ENCODE measurements at regions of chr1 and their contacts with region 1.

Region 1: DNA sequence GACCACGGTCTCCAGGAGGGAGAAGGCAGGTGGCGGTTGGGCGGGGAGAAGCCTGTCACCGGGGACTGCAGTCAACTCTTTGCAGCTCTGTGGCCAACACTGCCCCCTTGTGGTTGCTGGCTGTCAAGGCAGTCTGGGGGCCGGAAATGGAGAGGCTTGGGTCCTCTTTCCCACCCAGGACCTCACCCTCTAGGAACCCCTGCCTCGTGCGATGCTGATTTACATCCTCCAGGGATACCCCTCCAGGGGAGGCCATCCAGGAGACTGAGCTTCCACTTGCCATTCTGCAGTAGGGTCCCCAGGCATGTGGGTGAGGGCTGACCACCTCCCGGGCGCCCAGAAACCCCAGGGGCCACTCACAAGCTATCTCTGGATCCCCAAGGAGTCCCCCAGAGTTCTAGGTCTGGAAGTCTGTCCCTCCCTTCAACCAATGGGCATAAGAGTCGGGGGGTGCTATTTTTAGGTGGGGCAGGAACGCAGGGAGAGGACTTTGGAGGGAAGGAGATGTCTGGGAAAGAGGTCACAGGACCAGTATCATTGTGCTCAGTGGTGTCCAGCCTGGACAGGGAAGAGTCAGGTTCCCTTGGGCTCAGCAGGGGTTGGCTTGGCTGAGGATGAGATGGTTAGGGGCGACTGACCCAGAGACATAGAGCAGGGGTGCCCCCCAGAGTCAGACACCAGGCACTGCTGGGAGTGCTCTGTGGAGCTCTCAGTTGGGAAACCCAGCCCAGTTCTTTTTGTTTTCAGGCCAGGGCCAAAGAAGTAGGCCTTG is 7.1 kb upstream of the GPR61 start:
- DNase-seq: peak; percentile 85 to 92
- ATAC-seq: peak; percentile 74 to 77 (median 76)
- H3K4me3 ChIP-seq: peak overlapping the region; percentile 33
- H3K27ac ChIP-seq: peak overlapping the region; percentile 83
- H3K4me1 ChIP-seq: peaks cover 63% of the 10 kb centered on the region
- H3K27me3 ChIP-seq: no peaks in the 10 kb centered on the region
- CTCF ChIP-seq: peak; percentile 98

Region 2: DNA sequence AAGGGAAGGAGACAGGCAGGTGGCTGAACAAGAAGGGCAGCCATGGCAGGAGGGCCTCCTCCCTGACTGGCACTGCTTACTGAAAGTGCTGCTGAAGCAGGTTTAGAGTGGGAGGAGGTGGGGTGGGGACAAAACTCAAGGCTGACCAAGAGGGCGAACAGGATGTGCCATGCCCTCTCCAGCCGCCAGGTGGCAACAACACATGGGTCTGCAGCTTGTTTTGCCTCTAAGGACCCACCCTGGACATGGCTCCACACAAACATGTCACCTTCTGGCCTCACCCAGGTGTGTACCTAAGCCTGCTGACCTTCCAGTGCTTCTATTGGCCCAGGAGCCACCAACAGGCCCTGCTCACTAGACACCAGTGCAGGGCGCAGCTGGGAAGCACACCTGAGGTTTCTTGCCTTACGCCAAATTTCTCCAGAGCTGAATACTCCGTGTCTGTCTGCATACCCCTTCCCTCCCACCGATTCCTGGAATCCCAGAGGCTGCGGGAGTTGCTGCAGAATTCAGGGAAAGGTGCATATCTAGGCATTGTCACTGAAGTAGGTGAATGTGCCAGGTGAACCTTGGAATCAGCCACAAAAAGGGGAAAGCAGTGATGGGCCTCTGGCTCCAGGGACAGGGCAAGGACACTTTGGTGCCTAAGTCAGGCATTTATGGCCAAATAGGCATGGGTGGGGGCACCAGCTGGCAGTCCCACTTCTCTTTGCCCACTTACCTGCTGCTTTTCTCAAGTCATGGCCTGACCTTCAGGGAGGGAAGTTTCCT is 254.9 kb before region 1 on chr1:
- intact Hi-C with region 1: loop called in 1 of 2 experiments (anchors 2 kb)
- DNase-seq: peak; percentile 77 to 85
- ATAC-seq: peak; percentile 65 to 85 (median 78)
- H3K4me3 ChIP-seq: no peak overlapping the region
- H3K27ac ChIP-seq: no peak overlapping the region
- H3K4me1 ChIP-seq: no peaks in the 10 kb centered on the region
- H3K27me3 ChIP-seq: no peaks in the 10 kb centered on the region
- CTCF ChIP-seq: peak; percentile 87

Region 3: GRCh38 chr1:109412551-109412950 is 120.0 kb before region 1 on chr1:
- intact Hi-C with region 1: loop called in 1 of 2 experiments (anchors 5 kb)
- DNase-seq: no peak
- ATAC-seq: no peak
- H3K4me3 ChIP-seq: no peak overlapping the region
- H3K27ac ChIP-seq: no peak overlapping the region
- H3K4me1 ChIP-seq: peaks cover 30% of the 10 kb centered on the region
- H3K27me3 ChIP-seq: no peaks in the 10 kb centered on the region
- CTCF ChIP-seq: no peak

Region 4: DNA sequence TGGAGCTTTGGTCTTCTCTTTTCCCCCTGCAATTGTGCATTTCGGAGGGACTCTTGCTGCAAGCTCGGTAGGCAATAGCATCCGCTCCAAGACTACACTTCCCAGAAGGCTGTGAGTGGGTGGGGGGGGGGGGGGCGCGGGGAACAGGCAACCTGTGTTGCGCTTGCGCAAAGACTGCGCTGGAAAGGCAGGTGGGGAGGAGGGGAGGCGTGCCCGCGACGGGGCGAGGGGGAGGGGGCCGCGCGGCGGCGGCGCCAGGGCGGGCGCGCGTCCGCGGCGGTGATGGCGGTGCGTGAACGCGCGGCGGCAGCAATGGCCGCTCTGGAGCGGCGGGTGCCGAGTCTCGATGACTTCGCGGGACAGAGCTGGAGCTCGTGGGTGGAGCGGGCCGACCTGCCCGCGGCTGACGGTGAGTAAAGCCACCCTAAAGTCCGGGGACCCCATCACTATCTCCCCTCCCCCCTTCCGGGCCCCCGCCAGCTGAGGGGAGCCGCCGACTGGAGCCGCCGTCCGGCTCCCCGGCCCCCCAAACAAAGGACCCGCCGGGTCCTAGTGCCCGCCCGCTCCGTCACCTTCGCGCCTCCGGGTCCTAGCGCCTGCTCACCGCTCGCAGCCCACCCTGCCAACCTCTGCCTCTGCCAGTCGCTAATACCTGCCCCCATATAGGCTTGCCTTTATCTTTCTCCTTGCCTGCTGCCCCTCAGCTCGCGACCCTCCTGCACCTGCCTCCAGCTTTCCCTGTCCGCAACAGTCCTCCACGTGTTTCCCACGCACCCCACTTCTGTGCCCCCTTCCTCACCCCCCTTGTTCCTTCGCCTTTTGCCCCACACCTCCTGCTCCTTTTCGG is 48.7 kb before region 1 on chr1 and contains the start of gene ATXN7L2:
- intact Hi-C with region 1: no loop called
- DNase-seq: peak; percentile 93 to 97
- ATAC-seq: peak; percentile 83 to 87 (median 86)
- H3K4me3 ChIP-seq: peak within 1 kb of the TSS; percentile 85
- H3K27ac ChIP-seq: peak within 1 kb of the TSS; percentile 98
- H3K4me1 ChIP-seq: peaks cover 46% of the 10 kb centered on the region
- H3K27me3 ChIP-seq: no peaks in the 10 kb centered on the region
- CTCF ChIP-seq: no peak
- total RNA-seq, gene ATXN7L2: 4.4 to 14.1 (median 8.4) TPM

Region 5: GRCh38 chr1:109493805-109494539 is 38.6 kb before region 1 on chr1 and contains the start of gene CYB561D1:
- intact Hi-C with region 1: loop called (anchors 1 to 2 kb)
- DNase-seq: peak; percentile 89 to 94
- ATAC-seq: peak; percentile 81 to 90 (median 85)
- H3K4me3 ChIP-seq: peak within 1 kb of the TSS; percentile 90
- H3K27ac ChIP-seq: peak within 1 kb of the TSS; percentile 77
- H3K4me1 ChIP-seq: peaks cover 34% of the 10 kb centered on the region
- H3K27me3 ChIP-seq: no peaks in the 10 kb centered on the region
- CTCF ChIP-seq: peak; percentile 92
- total RNA-seq, gene CYB561D1: 2.4 to 4.0 (median 3.7) TPM